ENCODE measurements at regions of chr12 and their contacts with region 1.

Region 1: DNA sequence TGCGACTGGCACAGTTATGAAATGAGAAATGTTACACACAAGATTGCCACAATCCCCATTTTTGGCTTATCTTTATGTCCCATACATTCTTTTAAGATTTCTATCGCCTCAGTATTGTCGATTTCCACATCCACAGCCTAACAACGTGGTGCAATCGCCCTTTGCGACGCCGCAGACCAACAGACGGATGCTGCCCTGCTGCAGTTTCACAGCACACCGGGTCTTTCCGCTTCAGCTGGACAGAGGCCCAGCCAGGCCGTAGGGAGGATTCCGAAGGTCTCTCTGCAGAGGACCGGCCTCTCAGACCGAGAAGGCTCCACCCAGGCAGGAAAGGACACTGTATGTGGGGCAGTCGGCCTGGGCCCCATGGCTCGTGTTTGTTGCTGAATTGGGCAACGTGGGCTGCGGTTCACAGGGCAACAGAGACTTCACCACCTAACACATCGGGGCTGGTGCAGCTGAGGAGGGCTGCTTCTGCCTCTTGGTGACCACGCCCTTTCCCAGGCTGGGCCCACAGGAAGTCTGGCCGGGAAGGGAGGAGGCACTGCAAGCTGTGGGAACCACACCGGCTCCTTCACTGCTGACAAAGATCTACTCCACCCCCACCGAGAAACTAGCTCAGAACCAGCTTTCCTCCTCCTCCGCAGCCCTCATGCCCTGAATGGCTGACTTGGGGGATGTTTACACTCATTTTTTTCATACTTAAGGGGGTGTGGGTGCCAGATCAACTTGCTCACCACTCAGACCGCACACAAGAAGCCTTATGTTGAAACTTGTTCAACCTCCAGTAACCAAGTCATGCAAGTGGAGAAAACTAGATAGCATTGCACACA is 32.9 kb upstream of the MDM1 start:
- DNase-seq: peak; percentile 97

Region 2: DNA sequence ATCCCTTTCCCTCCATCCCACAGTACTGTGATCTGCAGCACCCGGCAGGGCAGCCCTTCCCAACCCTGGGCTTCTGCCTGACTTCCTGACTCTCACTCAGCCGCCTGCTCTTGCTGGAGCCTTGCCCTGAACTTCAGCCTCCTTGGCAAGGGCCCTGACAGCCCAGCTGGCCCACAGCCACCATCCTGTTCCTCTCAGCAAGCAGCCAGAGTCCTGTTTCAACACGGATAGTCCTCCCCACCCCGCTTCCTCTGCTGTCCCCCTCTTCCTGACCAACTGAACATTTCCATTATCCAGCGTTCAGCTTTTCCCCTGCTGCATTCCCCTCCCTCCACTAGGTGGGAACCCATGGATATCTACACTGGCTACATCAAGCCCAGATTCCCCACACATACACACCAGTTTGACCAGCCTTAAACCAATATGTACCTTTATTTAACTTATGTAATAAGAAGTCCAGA is 41.1 kb after region 1 on chr12:
- intact Hi-C with region 1: loop called (anchors 5 kb)
- DNase-seq: peak; percentile 95

Region 3: GRCh38 chr12:68451261-68452077 is 86.4 kb after region 1 on chr12:
- intact Hi-C with region 1: loop called (anchors 5 kb)
- DNase-seq: no peak

Region 4: GRCh38 chr12:68538726-68539614 is 173.9 kb after region 1 on chr12:
- intact Hi-C with region 1: loop called (anchors 10 kb)
- DNase-seq: peak; percentile 83

Region 5: DNA sequence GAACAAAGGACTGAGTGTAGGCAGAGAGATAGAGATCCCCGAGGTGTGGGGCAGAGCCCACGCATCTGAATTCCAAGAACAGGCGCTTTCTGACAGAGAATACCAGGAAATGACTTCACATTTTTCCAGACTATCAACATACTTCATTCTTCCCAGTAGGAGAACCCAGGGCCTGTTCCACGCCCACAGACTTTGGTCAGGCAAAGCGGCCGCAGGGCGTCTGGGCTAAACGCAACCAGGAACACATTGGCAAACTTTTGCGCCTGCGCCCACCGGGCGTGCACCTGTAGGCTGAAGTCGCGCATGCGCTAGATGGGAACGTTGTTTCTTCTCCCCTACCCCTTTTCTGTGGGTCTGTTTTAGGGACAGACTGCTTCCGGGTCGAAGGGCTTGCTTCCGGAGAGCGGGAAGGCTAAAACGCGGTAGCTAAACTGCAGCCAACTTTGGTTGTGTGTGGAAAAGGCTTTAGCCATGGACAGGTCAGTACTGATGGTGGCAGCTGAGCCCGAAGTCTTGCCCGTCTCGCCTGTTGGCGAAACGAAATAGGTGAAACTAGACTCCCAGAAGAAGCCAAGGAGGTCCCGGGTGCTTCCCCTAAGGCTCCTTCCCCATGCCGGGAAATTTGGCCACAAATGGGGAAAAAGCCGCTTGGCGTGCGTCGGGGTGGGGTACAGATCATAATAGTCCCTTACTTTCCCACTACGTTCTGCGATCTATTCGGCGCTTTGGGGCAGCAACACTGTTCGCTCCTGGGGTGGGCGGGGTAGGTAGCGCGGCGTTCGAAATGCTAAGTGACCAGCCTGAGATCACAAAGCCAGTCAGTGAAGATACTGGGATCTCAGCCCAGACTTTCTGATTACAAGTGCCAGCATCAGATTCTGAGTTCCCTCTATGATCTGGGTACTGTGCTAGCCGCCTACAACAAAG is 321.7 kb after region 1 on chr12 and contains the start of gene NUP107:
- intact Hi-C with region 1: loop called (anchors 1 kb)
- DNase-seq: peak; percentile 99
- total RNA-seq, gene NUP107: 23.1 TPM